ENCODE measurements at regions of chr1 and their contacts with region 1.

Region 1: DNA sequence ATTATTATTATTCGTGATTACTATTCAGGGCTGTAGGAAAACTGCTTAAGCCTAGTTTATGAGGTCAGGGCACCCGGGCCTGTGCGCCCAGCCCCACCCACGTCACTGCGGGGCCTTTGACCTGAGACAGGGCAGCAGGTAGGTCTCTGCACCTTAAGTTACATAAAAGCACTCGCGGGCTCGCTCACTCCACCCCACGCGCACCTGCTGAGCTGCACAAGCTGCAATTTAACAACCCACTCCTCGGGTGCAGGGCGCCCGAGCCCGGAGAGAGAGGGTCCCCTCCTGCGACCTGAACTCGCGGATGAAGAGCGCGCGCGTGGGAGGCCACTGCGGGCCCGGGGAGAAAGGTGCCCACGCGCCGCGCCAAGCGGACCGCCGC is 477 bp downstream of the ICMT start:
- DNase-seq: no peak
- ATAC-seq: peak; percentile 36
- H3K4me3 ChIP-seq: peak overlapping the region; percentile 91
- H3K27ac ChIP-seq: peak overlapping the region; percentile 73
- H3K4me1 ChIP-seq: peaks cover 5% of the 10 kb centered on the region; the same call in 1 of the 2 replicates
- H3K27me3 ChIP-seq: peaks cover 0 to 4% of the 10 kb centered on the region in 2 experiments; a peak in 2 of 4 replicates
- CTCF ChIP-seq: no peak
- EP300 ChIP-seq: no peak
- POLR2A ChIP-seq: no peak
- RAD21 ChIP-seq: no peak

Region 2: DNA sequence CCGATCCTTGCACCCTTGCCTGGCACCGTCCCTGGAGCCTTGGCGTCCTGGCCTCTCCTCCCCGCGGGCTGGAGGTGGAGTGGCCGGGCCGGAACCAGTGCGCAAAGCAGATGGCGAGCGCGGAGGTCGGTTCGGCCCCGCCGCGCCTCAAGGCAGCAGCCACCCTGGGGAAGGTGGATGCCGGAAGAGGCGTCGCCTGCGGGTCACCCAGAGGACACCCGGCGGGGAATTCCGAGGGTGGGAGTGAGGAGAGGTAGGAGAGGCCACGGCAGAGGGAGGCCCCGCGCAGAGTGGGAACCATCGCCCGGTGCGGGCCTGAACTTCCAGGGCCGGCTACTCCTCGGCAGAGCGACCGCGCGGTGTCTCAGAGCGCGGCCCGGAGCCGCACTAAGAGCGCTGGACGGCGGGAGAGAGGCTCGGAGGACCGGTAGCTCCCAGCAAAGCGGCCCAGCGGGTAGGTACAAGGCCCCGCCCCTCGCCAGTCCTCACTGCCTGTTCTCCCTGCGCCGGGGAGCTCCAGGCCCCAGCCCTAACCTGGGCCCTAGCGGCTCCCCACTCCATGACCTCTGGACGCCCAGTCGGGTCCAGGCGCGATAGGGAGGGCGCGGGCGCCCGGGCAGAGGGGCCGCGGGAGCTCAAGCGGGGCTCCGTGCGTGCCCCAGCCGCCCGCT is 29.3 kb before region 1 on chr1 and contains the start of gene RNF207:
- CTCF ChIA-PET with region 1: interaction called, 10 read pairs
- POLR2A ChIA-PET with region 1: interaction called, 10 read pairs
- RAD21 ChIA-PET with region 1: interaction called, 10 read pairs
- SMC1A ChIA-PET with region 1: interaction called, 4 read pairs
- in situ Hi-C with region 1: no loop called
- intact Hi-C with region 1: no loop called
- DNase-seq: no peak
- ATAC-seq: peak; percentile 84
- H3K4me3 ChIP-seq: peak within 1 kb of the TSS; percentile 75
- H3K27ac ChIP-seq: peak within 1 kb of the TSS; percentile 88
- H3K4me1 ChIP-seq: peaks cover 18% of the 10 kb centered on the region
- H3K27me3 ChIP-seq: no peaks in the 10 kb centered on the region
- CTCF ChIP-seq: no peak
- EP300 ChIP-seq: no peak
- POLR2A ChIP-seq: peak; percentile 92
- RAD21 ChIP-seq: no peak
- polyA plus RNA-seq, gene RNF207: 1.7 to 3.6 TPM

Measured in GM12878 (cell line).